Spleen (tissue), 13 donors: ENCODE measurements at regions of chr7 and their contacts with region 1.

Region 1: DNA sequence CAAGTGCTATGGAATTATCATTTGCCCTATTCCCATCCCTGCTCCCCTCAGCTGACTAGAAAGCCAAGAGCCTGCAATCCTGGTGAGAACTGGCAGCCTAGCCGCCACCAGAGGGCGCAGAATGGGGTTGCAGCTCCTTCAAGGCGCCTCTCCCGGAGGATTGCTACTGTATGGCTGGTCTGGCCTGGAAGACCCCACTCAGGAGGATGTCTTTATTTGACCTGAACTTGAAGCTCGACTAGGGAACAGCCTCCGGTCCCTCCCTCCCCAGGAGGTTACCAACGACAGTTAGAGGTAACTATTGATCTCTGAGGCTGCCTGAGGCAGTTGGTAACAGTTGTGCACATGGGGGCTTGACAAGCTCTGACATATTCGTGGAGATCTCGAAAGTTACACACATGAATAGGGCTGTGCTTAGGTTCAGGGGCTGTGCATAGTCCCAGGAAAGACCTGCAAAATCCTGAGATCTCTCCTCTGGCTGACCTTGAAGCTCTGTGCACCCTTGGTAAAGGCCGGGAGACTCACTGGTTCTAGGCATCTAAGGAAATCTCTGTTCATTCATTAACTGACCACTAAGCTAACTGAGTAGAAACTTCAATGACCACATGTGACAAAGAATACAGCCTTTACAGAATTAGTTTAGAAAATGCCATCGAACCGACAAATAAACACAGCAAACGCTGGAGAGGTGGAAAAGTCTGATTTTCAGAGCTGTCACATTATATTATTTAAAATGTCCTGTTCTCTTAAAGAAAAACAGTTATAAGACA is 65.7 kb downstream of the TSPAN12 start:
- DNase-seq: peak; percentile 88
- H3K4me3 ChIP-seq: no peak overlapping the region
- H3K27ac ChIP-seq: no peak overlapping the region
- H3K4me1 ChIP-seq: peaks cover 0 to 6% (median 2%) of the 10 kb centered on the region in 6 donors
- H3K27me3 ChIP-seq: no peaks in the 10 kb centered on the region
- CTCF ChIP-seq: peak in 10 of 11 experiments; percentile 30 to 88 (median 74)
- POLR2A ChIP-seq: no peak

Region 2: GRCh38 chr7:120877701-120878100 is 85.4 kb after region 1 on chr7:
- intact Hi-C with region 1: no loop called
- DNase-seq: no peak
- H3K4me3 ChIP-seq: no peak overlapping the region
- H3K27ac ChIP-seq: no peak overlapping the region
- H3K4me1 ChIP-seq: no peaks in the 10 kb centered on the region
- H3K27me3 ChIP-seq: no peaks in the 10 kb centered on the region
- CTCF ChIP-seq: no peak
- POLR2A ChIP-seq: no peak

Region 3: DNA sequence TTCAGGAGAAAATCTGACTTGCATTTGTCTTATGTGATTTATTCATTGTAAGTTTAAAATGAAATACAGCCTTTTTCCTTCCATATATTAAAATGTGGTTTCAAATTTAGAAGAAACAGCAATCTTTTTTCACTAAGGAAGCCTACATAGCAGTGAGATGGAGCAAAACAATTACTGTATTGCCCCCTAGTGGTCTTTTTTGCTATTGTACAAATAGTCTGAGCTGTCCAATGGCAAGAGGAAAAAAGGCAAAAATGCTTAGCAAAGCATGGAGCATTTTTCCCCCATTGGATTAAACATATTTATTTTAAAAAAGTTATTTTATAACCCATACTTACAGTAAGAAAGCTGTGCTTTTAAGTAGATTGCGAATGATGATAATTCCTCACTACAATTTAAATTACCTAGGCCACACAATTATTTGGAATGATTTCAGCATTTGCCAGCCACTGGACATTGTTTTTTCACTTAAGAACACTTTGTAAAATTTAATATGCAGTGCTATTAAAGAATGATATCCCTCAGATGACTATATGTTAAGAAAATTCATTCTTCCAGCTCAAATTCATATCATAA is 315.7 kb after region 1 on chr7:
- intact Hi-C with region 1: loop called (anchors 10 kb)
- DNase-seq: no peak
- H3K4me3 ChIP-seq: no peak overlapping the region
- H3K27ac ChIP-seq: no peak overlapping the region
- H3K4me1 ChIP-seq: peaks cover 0 to 4% (median 0%) of the 10 kb centered on the region in 6 donors
- H3K27me3 ChIP-seq: no peaks in the 10 kb centered on the region
- CTCF ChIP-seq: peak; percentile 38 to 85 (median 68)
- POLR2A ChIP-seq: no peak